ENCODE measurements at regions of chr14 and their contacts with region 1.

Region 1: DNA sequence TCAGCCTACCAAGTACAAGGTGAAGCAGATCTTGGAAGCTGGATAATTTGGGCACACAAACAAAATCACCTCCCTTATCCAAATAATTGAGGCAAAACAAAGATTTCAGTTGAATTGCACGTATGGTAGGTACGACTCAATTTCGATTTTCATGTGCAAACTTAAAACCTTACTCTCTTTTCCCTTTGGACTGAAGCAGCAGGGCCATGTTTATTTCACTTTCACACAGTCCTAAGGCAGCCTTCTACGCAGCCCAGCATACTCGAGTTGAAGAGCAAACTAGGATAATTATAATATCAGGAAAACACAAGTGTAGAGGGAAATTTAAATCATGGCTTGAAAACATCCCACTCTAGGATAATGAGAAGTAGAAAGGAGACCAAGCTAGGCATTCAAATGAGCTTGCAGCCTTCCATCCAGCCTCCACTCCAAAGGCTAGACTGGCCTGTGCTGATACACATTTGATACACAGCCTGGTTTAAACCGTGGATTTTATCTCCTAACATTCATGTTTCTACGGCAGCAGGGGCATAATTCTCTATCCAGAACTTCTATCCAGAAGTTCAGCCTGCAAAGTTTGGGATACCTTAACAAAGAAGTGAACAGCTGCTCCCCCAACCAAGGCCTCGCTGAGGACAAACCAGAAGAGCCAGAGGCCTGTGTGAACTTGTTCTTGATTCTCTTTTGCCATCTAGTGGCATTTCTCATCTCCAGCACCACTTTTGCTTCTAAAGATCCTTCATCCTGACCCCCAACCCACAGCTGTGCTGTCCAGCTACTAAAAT is 2.4 kb upstream of the RNASE7 start:
- DNase-seq: no peak
- H3K4me3 ChIP-seq: peak overlapping the region in 1 of 2 donors; percentile 12
- H3K27ac ChIP-seq: peak overlapping the region; percentile 67 to 80
- H3K4me1 ChIP-seq: peaks cover 5 to 16% of the 10 kb centered on the region in 2 donors
- H3K27me3 ChIP-seq: no peaks in the 10 kb centered on the region
- CTCF ChIP-seq: peak; percentile 68 to 82 (median 73)

Region 2: DNA sequence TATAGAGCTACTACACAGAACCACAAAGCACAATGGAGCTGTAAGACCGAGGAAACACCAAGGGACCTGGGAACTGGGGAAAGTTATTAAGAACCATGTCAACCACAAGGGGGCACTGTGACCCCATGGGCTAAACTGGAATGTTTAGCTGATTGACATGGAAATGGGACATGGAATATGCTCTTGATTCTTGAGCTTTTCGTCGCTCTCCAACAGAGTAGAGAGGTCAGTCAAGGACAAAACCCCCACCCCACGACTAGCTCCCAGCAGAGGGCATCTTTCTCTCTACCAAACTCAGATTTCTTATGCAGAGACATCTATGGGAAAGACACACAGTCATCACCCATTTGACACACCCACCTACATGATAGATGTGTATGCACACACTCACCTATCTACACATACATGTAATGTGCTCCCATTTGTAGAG is 25.0 kb before region 1 on chr14:
- intact Hi-C with region 1: loop called (anchors 1 kb)
- DNase-seq: peak in 1 of 2 donors; percentile 91
- H3K4me3 ChIP-seq: no peak overlapping the region
- H3K27ac ChIP-seq: no peak overlapping the region
- H3K4me1 ChIP-seq: no peaks in the 10 kb centered on the region
- H3K27me3 ChIP-seq: no peaks in the 10 kb centered on the region
- CTCF ChIP-seq: peak; percentile 87 to 94 (median 88)

Region 3: GRCh38 chr14:21024585-21025370 is 15.0 kb before region 1 on chr14 and contains the start of gene NDRG2:
- intact Hi-C with region 1: loop called (anchors 1 kb)
- DNase-seq: peak in 1 of 2 donors; percentile 85
- H3K4me3 ChIP-seq: peak within 1 kb of the TSS; percentile 67 to 93
- H3K27ac ChIP-seq: peak within 1 kb of the TSS; percentile 84 to 88
- H3K4me1 ChIP-seq: peaks cover 6 to 20% of the 10 kb centered on the region in 2 donors
- H3K27me3 ChIP-seq: no peaks in the 10 kb centered on the region
- CTCF ChIP-seq: no peak
- total RNA-seq, gene NDRG2: 216 TPM

Region 4: DNA sequence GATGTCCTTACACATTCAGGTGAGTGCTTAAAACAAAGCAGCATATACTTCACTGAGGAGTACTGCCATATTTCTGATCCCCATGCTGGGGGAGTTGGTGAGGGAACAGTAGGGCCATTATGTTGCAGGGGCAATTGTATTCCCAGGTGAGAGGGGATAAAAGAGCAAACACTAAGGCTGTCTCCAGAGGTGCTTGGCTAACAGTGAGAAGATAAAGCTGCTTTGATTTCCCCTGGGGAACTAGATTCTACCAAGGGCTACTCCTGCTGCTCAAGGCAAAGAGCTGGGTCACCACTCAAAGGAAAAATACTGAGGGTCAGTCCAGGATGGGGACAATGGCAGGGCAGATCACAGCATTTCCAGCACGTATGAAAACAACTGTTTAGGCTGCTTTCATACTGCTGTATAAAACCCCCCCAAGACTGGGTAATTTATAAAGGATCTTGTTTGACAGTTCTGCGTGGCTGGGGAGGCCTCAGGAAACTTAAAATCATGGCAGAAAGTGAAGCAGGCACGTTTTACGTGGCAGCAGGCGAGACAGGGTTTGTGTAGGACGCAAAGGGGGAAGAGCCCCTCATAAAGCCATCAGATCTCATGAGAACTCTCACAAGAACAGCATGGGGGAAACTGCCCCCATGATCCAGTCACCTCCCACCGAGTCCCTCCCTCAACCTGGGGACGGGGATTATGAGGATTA is 163.8 kb after region 1 on chr14:
- intact Hi-C with region 1: no loop called
- DNase-seq: no peak
- H3K4me3 ChIP-seq: no peak overlapping the region
- H3K27ac ChIP-seq: no peak overlapping the region
- H3K4me1 ChIP-seq: no peaks in the 10 kb centered on the region
- H3K27me3 ChIP-seq: no peaks in the 10 kb centered on the region
- CTCF ChIP-seq: no peak